ENCODE measurements at regions of chr6 and their contacts with region 1.

Region 1: GRCh38 chr6:124870611-124871459 is 91.4 kb upstream of the RNF217 start:
- DNase-seq: peak; percentile 46
- H3K4me3 ChIP-seq: no peak overlapping the region
- H3K27ac ChIP-seq: no peak overlapping the region
- H3K4me1 ChIP-seq: no peaks in the 10 kb centered on the region
- H3K27me3 ChIP-seq: no peaks in the 10 kb centered on the region
- CTCF ChIP-seq: peak; percentile 79

Region 2: DNA sequence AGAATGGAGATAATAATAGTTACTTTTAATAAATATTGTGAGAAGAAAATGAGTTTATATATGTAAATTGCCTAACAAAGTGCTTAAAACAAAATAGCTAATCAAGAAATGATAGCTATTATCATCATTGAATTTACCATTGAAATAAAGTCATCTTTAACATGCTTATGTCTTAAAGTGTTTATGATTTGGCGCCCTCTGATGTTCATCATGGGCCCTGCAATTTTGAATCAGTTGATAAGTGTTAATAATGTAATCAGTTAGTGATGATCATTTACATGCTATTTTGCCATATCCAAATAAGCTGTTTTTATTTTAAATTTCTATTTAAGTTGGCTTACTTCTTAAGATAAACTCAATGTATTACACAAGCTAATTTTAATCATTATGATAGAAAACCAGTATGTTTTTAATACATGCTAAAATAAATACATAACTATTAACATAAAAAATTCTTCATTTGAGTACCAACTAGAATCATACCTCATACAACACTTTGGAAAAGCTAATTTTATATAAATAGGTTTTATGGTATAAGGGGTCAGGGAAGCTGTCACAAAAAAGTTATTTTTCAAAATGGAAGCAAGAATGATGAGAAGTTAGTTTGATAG is 243.5 kb after region 1 on chr6:
- CTCF ChIA-PET with region 1: interaction called, 5 read pairs
- POLR2A ChIA-PET with region 1: no interaction called
- intact Hi-C with region 1: loop called (anchors 1 kb)
- DNase-seq: peak; percentile 78
- H3K4me3 ChIP-seq: no peak overlapping the region
- H3K27ac ChIP-seq: no peak overlapping the region
- H3K4me1 ChIP-seq: no peaks in the 10 kb centered on the region
- H3K27me3 ChIP-seq: no peaks in the 10 kb centered on the region
- CTCF ChIP-seq: peak; percentile 95

Region 3: GRCh38 chr6:125314019-125314581 is 443.3 kb after region 1 on chr6:
- CTCF ChIA-PET with region 1: interaction called, 3 read pairs
- POLR2A ChIA-PET with region 1: no interaction called
- intact Hi-C with region 1: loop called (anchors 2 kb)
- DNase-seq: peak; percentile 82
- H3K4me3 ChIP-seq: no peak overlapping the region
- H3K27ac ChIP-seq: no peak overlapping the region
- H3K4me1 ChIP-seq: no peaks in the 10 kb centered on the region
- H3K27me3 ChIP-seq: no peaks in the 10 kb centered on the region
- CTCF ChIP-seq: peak; percentile 93

Region 4: DNA sequence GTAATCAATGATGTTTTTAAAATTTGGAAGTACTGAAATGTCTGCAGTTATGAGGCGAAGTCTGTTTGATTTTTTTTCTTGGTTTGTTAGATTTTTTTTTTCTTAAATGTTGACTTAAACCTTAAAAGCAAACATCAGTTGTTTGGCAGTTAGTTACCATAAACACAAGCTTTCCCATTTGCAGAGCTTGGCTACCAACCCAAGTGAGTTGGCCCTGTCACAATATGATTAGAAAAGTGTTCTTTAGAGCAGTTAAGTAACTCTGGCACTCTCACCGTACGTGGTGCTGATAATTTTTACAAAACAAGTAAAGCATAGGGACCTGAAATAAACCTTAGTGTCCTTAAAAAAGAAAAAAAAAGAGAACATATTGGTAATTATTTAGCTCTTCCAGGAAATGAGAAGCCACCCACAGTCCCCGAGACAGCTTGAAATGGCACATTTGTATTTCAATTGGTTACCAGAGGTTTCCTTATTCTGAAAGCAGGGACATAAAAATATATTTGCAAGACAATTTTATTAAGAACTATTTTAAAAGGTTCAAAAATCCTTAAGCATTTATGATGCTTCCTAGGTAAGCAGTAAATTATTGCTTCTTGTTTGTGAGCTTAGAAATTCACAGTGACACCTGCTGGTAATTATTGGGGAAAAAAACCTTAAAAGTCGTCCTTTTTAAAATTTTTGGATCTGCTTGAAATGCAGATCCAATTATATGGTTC is 882.5 kb after region 1 on chr6:
- CTCF ChIA-PET with region 1: interaction called, 3 read pairs
- POLR2A ChIA-PET with region 1: no interaction called
- intact Hi-C with region 1: loop called (anchors 5 kb)
- DNase-seq: peak; percentile 55
- H3K4me3 ChIP-seq: no peak overlapping the region
- H3K27ac ChIP-seq: no peak overlapping the region
- H3K4me1 ChIP-seq: peaks cover 10% of the 10 kb centered on the region
- H3K27me3 ChIP-seq: peaks cover 36% of the 10 kb centered on the region
- CTCF ChIP-seq: peak; percentile 60

Region 5: GRCh38 chr6:125773387-125774341 is 902.8 kb after region 1 on chr6:
- CTCF ChIA-PET with region 1: no interaction called
- POLR2A ChIA-PET with region 1: no interaction called
- intact Hi-C with region 1: loop called (anchors 2 kb)
- DNase-seq: no peak
- H3K4me3 ChIP-seq: no peak overlapping the region
- H3K27ac ChIP-seq: no peak overlapping the region
- H3K4me1 ChIP-seq: no peaks in the 10 kb centered on the region
- H3K27me3 ChIP-seq: no peaks in the 10 kb centered on the region
- CTCF ChIP-seq: no peak

Region 6: DNA sequence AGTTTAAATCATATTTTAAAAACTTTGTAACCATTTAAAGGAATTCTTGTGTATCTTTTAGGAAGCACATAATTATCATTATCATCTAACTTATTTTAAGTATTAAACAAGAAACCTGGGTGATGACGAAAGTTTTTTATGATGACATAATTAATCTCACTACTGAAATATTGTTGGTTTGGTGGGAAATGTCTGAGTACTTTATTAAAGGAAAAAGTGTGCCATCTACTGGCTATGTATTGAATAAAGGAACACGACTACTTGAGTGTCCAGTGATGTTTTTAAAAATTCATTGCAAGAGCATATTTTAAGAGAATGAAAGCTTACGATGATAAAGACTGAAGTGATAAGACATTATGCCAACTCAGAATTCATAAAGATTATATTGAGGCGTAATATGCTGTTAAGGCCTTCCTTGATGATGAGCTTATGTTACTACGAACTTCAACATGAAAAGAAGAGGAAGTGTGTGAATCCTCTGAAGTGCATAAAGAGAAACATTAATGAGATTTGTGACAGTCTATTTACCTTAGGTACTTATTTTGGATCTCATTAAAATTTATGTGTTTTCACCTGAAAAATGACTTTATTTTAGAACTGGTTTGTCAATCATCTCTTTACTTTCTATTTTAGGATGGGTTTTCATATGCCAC is 1103.5 kb after region 1 on chr6:
- CTCF ChIA-PET with region 1: no interaction called
- POLR2A ChIA-PET with region 1: no interaction called
- intact Hi-C with region 1: loop called (anchors 10 kb)
- DNase-seq: peak; percentile 78
- H3K4me3 ChIP-seq: no peak overlapping the region
- H3K27ac ChIP-seq: peak overlapping the region; percentile 41
- H3K4me1 ChIP-seq: no peaks in the 10 kb centered on the region
- H3K27me3 ChIP-seq: no peaks in the 10 kb centered on the region
- CTCF ChIP-seq: peak; percentile 71

Region 7: DNA sequence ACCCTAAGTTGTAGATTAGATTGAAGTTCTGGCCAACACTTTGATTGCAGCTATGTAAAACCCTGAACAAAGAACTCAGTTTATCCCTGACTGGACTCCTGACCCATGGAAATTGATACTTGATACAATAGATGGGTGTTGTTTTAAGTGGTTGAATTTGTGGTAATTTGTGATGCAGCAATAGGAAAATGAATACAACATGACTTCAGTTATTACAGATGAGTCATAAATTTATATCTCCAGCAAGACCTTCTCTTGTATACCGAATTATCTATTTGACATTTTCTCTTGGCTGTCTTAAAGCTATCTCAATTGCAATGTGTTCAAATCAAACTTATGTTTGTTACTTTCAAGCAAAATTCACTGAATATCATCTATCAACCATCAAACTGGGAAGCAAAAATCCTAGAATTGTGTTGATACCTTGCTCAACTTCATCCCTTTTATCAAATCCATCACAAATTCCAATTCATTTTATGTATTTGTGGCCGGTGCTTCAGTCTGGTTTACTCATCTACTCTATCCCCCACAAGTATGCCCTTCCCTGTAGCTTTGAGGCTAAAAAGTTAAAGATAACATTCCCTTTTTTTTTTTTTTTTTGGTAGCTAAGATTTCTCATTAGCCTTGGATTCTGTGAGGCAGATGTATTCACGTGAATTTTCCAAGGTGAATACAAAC is 1339.7 kb after region 1 on chr6:
- CTCF ChIA-PET with region 1: no interaction called
- POLR2A ChIA-PET with region 1: interaction called, 14 read pairs
- intact Hi-C with region 1: no loop called
- DNase-seq: no peak
- H3K4me3 ChIP-seq: no peak overlapping the region
- H3K27ac ChIP-seq: no peak overlapping the region
- H3K4me1 ChIP-seq: no peaks in the 10 kb centered on the region
- H3K27me3 ChIP-seq: no peaks in the 10 kb centered on the region
- CTCF ChIP-seq: no peak

Measured in A673 (cell line).